ENCODE measurements at regions of chr4 and their contacts with region 1.

Region 1: DNA sequence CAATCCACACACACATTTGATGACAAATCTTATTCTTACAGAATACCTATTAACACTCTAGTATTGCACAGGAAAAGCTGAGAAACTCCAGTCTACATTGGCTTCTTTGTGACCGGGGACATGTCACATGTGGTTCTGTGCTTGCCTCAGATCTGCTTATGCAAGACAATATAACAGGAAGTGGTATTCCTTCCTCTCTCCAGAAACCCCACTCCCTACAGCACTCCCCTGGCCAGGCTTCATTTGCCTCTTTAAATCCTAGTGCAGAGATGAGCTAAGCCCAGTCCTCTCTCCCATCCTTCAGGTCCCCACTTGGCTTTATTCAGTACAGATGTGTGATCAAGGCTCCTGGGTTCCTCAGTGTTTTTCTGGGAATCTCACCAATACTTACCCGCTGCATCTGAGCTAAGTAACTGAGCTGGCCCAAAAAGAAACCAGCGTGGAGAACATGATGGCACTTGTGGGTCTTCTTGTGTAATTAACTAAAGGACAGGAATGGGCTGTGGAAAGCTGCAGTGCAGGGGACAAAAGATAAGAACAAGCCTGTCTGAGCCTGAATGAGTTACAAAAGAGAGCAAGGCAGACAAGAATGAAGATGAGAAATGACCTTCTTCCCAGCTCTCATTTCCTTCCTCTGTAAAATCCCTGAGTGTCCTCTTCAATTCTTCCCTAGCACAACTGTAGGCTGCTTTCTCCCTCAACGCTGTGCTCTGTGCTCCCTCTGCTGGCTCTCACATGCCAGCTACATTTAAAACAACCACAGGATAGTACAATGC is 105.6 kb downstream of the HNRNPD start:
- DNase-seq: peak; percentile 34 to 88 (median 63)

Region 2: GRCh38 chr4:81069706-81070331 is 1198.4 kb before region 1 on chr4:
- intact Hi-C with region 1: loop called (anchors 5 kb)
- DNase-seq: peak in 8 of 10 donors; percentile 11 to 84 (median 54)

Region 3: GRCh38 chr4:81405894-81406401 is 862.3 kb before region 1 on chr4:
- intact Hi-C with region 1: loop called (anchors 1 kb)
- DNase-seq: peak in 3 of 10 donors; percentile 44 to 64 (median 48)

Region 4: DNA sequence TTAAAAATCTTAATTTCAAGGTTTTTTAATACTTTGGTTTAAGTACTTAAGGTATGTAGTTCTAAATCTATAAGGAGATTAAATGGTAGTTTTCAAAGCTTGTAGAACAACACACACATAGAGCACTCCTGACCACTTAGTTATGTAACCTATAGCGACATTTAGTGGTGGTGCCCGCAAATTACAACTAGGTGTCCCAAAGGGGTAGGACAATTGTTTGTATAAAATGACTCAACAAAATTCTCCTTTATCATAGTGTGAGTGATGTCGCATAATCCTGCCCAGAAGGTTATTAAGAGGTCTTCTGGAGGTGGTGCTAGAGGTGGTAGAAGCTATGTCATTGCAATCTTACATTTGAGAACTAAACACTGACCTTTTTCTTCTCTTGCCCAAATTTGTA is 423.5 kb before region 1 on chr4:
- intact Hi-C with region 1: loop called (anchors 2 kb)
- DNase-seq: peak in 7 of 10 donors; percentile 36 to 82 (median 71)

Measured in posterior cingulate gyrus (tissue), 11 donors.